ENCODE measurements at regions of chr16 and their contacts with region 1.

Region 1: GRCh38 chr16:53080345-53081031 is 25.7 kb downstream of the CHD9 start:
- DNase-seq: peak in 1 of 10 donors; percentile 76

Region 2: GRCh38 chr16:53154513-53154912 is 74.0 kb after region 1 on chr16:
- intact Hi-C with region 1: no loop called
- DNase-seq: no peak

Region 3: GRCh38 chr16:53207810-53208752 is 127.6 kb after region 1 on chr16:
- intact Hi-C with region 1: loop called (anchors 10 kb)
- DNase-seq: peak in 9 of 10 donors; percentile 10 to 81 (median 40)

Measured in posterior cingulate gyrus (tissue), 11 donors.